MCF 10A (cell line): ENCODE measurements at regions of chr15 and their contacts with region 1.

Region 1: DNA sequence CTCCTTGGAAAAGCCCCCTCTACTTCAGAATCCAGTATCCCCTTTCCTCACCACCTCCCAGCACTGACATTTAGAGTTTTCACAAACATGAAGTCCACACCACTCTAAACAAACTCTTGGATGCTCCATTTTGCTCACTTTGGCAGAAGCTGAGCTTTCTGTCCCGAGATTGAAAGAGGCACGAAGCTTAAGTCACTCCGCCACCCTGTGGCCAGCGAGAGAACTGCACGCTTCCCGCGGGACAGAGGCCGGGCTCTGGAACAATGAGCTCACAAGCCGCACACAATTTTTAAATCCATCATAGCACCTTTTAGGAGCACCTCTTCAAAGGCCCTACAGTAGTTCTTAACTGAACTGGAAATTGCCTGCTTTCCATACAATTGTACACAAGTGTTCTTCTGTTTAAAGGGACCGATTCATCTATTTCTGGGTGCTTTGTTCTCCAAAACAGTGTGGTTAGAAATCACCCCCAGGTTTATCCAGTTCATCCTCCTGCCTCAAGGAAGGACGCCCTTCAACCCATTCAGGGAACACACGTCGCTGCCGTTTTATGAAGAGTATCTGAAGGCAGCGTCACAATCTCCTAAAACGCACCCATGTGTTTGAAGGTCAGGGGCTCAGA is 226.1 kb downstream of the VPS13C start:
- DNase-seq: peak; percentile 71
- H3K4me3 Mint-ChIP-seq: no peak overlapping the region
- H3K27ac Mint-ChIP-seq: no peak overlapping the region
- H3K4me1 Mint-ChIP-seq: no peaks in the 10 kb centered on the region
- H3K27me3 Mint-ChIP-seq: no peaks in the 10 kb centered on the region
- CTCF ChIP-seq: peak; percentile 97

Region 2: GRCh38 chr15:60585743-60586708 is 1248.2 kb before region 1 on chr15:
- CTCF ChIA-PET with region 1: interaction called, 9 read pairs
- POLR2A ChIA-PET with region 1: interaction called, 3 read pairs
- intact Hi-C with region 1: loop called (anchors 10 kb)
- DNase-seq: peak; percentile 75
- H3K4me3 Mint-ChIP-seq: no peak overlapping the region
- H3K27ac Mint-ChIP-seq: no peak overlapping the region
- H3K4me1 Mint-ChIP-seq: no peaks in the 10 kb centered on the region
- H3K27me3 Mint-ChIP-seq: no peaks in the 10 kb centered on the region
- CTCF ChIP-seq: peak; percentile 84

Region 3: GRCh38 chr15:61163234-61163633 is 671.0 kb before region 1 on chr15:
- CTCF ChIA-PET with region 1: interaction called, 43 read pairs
- POLR2A ChIA-PET with region 1: no interaction called
- intact Hi-C with region 1: loop called (anchors 1 kb)
- DNase-seq: no peak
- H3K4me3 Mint-ChIP-seq: no peak overlapping the region
- H3K27ac Mint-ChIP-seq: no peak overlapping the region
- H3K4me1 Mint-ChIP-seq: no peaks in the 10 kb centered on the region
- H3K27me3 Mint-ChIP-seq: peaks cover 54% of the 10 kb centered on the region
- CTCF ChIP-seq: no peak

Region 4: DNA sequence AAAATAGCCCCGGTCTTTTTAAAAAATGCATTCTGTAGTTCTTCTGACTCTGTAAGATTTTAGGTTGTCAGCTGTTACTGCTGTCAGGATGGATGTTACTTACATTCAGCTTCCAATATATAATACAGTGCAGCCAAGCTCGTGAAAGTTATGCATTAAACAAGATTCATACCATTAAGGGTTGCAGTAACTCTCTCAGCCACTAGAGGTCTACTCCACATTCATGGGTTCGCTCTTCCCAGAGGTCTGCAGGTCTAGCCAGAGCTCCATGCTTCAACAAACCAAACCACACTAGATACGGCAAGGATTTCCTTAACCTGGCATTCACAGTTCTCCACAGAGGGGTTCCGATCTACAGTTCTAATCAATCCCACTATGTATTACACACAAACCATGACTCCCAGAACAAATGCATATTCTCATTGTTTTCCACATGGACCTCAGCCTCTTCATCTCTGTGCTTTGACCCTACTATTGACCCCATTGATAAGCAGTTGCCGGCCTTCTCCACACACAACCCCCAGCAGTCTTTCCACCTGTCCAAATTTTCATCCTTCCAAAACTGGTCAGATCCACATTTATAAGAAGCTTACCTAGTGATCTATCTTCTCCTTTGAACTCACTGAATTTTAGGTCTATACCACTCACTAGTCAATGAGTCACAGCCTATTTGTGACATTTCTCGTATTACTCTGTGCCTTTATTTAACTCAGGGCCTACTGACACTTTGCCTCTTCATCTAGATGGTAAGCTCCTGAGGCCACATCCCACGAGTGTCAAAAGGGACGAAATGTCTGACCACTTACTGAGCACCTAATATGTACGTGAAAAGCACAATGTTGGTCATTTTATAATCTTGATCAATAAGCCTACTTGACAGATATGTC is 638.8 kb before region 1 on chr15:
- CTCF ChIA-PET with region 1: interaction called, 42 read pairs
- POLR2A ChIA-PET with region 1: no interaction called
- intact Hi-C with region 1: loop called (anchors 1 kb)
- DNase-seq: peak; percentile 64
- H3K4me3 Mint-ChIP-seq: no peak overlapping the region
- H3K27ac Mint-ChIP-seq: no peak overlapping the region
- H3K4me1 Mint-ChIP-seq: no peaks in the 10 kb centered on the region
- H3K27me3 Mint-ChIP-seq: no peaks in the 10 kb centered on the region
- CTCF ChIP-seq: peak; percentile 64

Region 5: DNA sequence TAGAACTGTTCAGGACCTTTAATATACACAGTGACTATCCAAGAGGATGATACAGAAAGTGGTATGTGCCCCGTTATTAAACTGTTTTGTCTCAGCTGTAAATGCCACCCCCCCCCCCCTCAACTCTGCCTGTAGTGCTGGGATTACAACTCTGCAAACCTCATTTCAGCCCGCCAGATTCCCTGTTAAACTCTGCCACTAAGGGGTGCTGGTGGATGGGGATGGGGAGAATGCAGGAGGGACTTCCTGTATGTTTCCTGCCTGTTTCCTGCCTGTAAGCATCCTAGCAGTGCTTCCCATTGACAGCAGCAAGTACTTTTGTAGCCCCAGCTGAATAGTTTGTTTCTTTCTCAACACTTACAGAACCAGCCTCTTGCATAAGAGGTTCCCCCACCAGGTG is 303.4 kb before region 1 on chr15:
- CTCF ChIA-PET with region 1: interaction called, 4 read pairs
- POLR2A ChIA-PET with region 1: no interaction called
- intact Hi-C with region 1: loop called (anchors 2 kb)
- DNase-seq: peak; percentile 9
- H3K4me3 Mint-ChIP-seq: no peak overlapping the region
- H3K27ac Mint-ChIP-seq: no peak overlapping the region
- H3K4me1 Mint-ChIP-seq: no peaks in the 10 kb centered on the region
- H3K27me3 Mint-ChIP-seq: no peaks in the 10 kb centered on the region
- CTCF ChIP-seq: no peak

Region 6: GRCh38 chr15:61660579-61660978 is 173.6 kb before region 1 on chr15:
- CTCF ChIA-PET with region 1: interaction called, 17 read pairs
- POLR2A ChIA-PET with region 1: no interaction called
- intact Hi-C with region 1: no loop called
- DNase-seq: peak; percentile 58
- H3K4me3 Mint-ChIP-seq: no peak overlapping the region
- H3K27ac Mint-ChIP-seq: peak overlapping the region; percentile 93
- H3K4me1 Mint-ChIP-seq: peaks cover 21% of the 10 kb centered on the region
- H3K27me3 Mint-ChIP-seq: no peaks in the 10 kb centered on the region
- CTCF ChIP-seq: no peak

Region 7: GRCh38 chr15:61822511-61822910 is 11.7 kb before region 1 on chr15:
- CTCF ChIA-PET with region 1: interaction called, 13 read pairs
- POLR2A ChIA-PET with region 1: no interaction called
- intact Hi-C with region 1: no loop called
- DNase-seq: no peak
- H3K4me3 Mint-ChIP-seq: no peak overlapping the region
- H3K27ac Mint-ChIP-seq: no peak overlapping the region
- H3K4me1 Mint-ChIP-seq: no peaks in the 10 kb centered on the region
- H3K27me3 Mint-ChIP-seq: no peaks in the 10 kb centered on the region
- CTCF ChIP-seq: no peak

Region 8: GRCh38 chr15:62066663-62067447 is 232.7 kb after region 1 on chr15 and contains the start of gene C2CD4A:
- CTCF ChIA-PET with region 1: no interaction called
- POLR2A ChIA-PET with region 1: no interaction called
- intact Hi-C with region 1: no loop called
- DNase-seq: peak; percentile 63
- H3K4me3 Mint-ChIP-seq: peak within 1 kb of the TSS; percentile 75
- H3K27ac Mint-ChIP-seq: no peak within 1 kb of the TSS
- H3K4me1 Mint-ChIP-seq: peaks cover 24% of the 10 kb centered on the region
- H3K27me3 Mint-ChIP-seq: peaks cover 10% of the 10 kb centered on the region
- CTCF ChIP-seq: no peak
- total RNA-seq, gene C2CD4A: 0.16 TPM in 1 of 2 replicates, not detected in the other